ENCODE measurements at regions of chr6 and their contacts with region 1.

Region 1: GRCh38 chr6:31680840-31681671 is at the start of gene LY6G5C:
- DNase-seq: peak; percentile 90 to 93
- ATAC-seq: peak; percentile 94
- H3K4me3 ChIP-seq: peak within 1 kb of the TSS in 1 of 2 donors; percentile 56
- H3K27ac ChIP-seq: no peak within 1 kb of the TSS
- H3K4me1 ChIP-seq: no peaks in the 10 kb centered on the region
- H3K27me3 ChIP-seq: no peaks in the 10 kb centered on the region
- total RNA-seq, gene LY6G5C: 1.2 to 3.3 TPM

Region 2: GRCh38 chr6:31568537-31568961 is 112.5 kb before region 1 on chr6:
- intact Hi-C with region 1: no loop called
- DNase-seq: no peak
- ATAC-seq: no peak
- H3K4me3 ChIP-seq: no peak overlapping the region
- H3K27ac ChIP-seq: no peak overlapping the region
- H3K4me1 ChIP-seq: no peaks in the 10 kb centered on the region
- H3K27me3 ChIP-seq: peaks cover 0 to 2% of the 10 kb centered on the region in 2 donors

Region 3: GRCh38 chr6:31769684-31770371 is 88.8 kb after region 1 on chr6:
- intact Hi-C with region 1: loop called in 1 of 2 experiments (anchors 5 kb)
- DNase-seq: peak; percentile 79 to 85
- ATAC-seq: no peak
- H3K4me3 ChIP-seq: no peak overlapping the region
- H3K27ac ChIP-seq: no peak overlapping the region
- H3K4me1 ChIP-seq: no peaks in the 10 kb centered on the region
- H3K27me3 ChIP-seq: no peaks in the 10 kb centered on the region

Region 4: DNA sequence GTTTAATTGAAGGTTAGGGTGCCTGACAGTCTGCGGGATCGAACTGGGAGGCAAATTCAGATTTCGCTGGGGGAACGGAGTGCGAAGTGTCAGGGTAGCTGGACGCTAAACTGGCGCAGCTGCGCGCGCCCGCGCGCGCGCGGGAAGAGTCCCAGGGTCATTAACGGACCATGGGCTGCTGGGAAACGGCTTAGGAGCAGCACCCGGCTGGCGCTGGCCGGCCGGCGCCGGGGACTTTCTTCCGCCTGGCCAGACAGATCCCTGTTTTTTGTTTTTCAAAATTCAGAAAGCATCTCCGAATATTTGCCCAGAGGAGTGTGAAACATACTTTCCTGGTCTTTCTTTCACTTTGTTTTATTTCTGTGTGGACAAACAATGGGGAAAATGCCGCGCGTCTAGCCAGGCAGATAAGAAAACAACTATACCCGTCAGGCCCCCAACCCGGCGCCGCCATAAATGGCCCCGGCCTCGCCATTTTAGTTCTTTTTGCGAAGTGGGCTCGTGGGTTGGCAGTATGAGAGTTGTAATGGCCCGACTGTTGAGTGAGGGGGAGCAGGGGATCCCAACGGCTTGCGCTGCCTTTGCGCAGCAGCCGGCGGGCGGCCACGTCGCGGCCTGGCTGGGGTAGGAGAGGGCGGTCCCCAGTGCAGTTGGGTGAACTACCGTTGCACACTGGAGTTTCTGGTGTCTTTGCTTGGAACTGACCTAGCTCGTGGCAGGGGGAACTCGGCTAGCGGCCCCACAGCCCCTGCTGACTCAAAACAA is 153.6 kb after region 1 on chr6:
- intact Hi-C with region 1: loop called (anchors 2 to 10 kb)
- DNase-seq: peak; percentile 92 to 95
- ATAC-seq: peak; percentile 90
- H3K4me3 ChIP-seq: peak overlapping the region; percentile 54 to 91
- H3K27ac ChIP-seq: peak overlapping the region; percentile 53 to 80
- H3K4me1 ChIP-seq: peaks cover 2 to 3% of the 10 kb centered on the region in 2 donors
- H3K27me3 ChIP-seq: no peaks in the 10 kb centered on the region

Region 5: DNA sequence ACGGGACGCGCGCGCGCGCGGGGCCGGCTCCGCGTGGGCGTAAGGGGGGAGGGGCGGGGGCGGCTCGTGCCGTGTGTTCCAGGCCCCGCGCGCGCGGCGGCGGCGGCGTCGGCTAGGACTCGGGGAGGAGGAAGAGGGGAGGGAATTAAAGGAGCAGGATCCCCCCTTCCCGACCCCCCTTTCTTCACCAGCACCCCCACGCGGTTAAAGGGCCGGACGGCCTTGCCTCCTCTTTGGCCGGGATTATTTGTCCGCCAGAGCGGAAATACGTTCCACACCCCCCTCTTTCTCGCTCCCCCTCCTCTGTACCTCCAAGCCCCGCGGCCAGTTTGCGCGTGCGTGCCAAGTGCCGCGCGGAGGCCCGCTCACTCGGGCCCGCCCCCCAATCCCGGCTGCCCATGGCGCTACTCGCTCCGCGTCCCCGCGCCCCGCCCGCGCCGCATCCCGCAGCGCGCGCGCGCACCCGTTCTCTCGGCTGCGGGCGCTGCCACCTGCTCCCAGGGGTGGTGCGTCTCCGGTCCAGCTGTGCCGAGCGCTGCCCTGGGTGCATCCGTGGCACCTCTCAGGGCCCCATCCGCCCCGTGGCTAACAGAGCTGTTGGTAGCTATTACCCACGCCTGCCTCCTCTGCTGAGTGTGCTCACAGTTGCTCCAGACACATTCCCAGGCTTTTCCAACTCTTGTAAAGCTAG is 221.0 kb after region 1 on chr6 and contains the start of gene ZBTB12:
- intact Hi-C with region 1: loop called in 1 of 2 experiments (anchors 5 kb)
- DNase-seq: peak; percentile 93 to 95
- ATAC-seq: peak; percentile 89
- H3K4me3 ChIP-seq: peak within 1 kb of the TSS; percentile 79 to 87
- H3K27ac ChIP-seq: peak within 1 kb of the TSS in 1 of 2 donors; percentile 56
- H3K4me1 ChIP-seq: no peaks in the 10 kb centered on the region
- H3K27me3 ChIP-seq: no peaks in the 10 kb centered on the region
- total RNA-seq, gene ZBTB12: 1.8 to 4.9 TPM

Measured in aorta (tissue), 5 donors.